Posterior vena cava (tissue), 2 donors: ENCODE measurements at regions of chr1 and their contacts with region 1.

Region 1: GRCh38 chr1:6880951-6881690 is 95.9 kb downstream of the CAMTA1 start:
- DNase-seq: no peak

Region 2: DNA sequence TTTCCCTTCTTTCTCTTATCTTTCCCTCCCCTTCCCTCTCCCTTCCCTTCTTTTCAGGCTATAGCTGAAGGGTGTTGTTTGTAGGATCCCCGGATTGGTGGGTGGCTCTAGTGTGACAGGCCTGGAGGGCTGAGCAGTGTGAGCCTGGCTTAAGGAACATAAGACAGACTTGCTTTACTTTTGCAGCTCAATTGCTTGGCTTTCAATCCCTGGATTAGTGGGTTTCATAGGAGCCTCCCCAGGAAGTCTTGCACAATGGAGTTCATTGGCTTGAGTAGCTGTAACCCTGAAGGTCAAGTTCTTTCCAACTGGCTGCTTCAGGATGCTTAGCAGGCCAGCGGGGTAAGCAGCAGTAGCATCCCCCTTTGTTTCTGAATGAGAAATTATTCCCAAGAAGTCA is 30.9 kb after region 1 on chr1:
- intact Hi-C with region 1: loop called in 1 of 2 experiments (anchors 2 kb)
- DNase-seq: no peak